ENCODE measurements at regions of chr2 and their contacts with region 1.

Region 1: GRCh38 chr2:11784747-11785610 is 38.5 kb downstream of the LPIN1 start:
- DNase-seq: peak; percentile 46
- H3K4me3 Mint-ChIP-seq: no peak overlapping the region
- H3K27ac Mint-ChIP-seq: no peak overlapping the region
- H3K4me1 Mint-ChIP-seq: no peaks in the 10 kb centered on the region
- H3K27me3 Mint-ChIP-seq: no peaks in the 10 kb centered on the region

Region 2: DNA sequence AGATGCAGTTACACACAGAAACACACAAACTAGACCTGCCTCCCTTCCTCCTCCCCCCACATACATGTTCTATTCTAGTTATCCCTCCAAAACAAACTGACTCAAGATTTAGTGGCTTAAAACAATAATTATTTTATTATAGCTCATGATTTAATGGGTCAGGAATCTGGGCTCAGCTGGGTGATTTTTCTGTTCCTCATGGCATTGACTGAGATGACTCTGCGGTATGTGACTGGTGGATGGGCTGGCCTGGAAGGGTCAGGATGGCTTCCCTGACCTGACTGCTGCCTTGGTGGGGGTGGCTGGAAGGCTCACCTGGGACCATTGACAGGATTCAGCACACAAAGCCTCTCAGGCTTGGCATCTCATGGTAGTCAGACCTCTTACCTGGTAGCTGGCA is 81.3 kb before region 1 on chr2:
- CTCF ChIA-PET with region 1: interaction called, 364 read pairs
- POLR2A ChIA-PET with region 1: no interaction called
- intact Hi-C with region 1: no loop called
- DNase-seq: no peak
- H3K4me3 Mint-ChIP-seq: no peak overlapping the region
- H3K27ac Mint-ChIP-seq: no peak overlapping the region
- H3K4me1 Mint-ChIP-seq: no peaks in the 10 kb centered on the region
- H3K27me3 Mint-ChIP-seq: no peaks in the 10 kb centered on the region

Region 3: GRCh38 chr2:12076810-12077209 is 291.8 kb after region 1 on chr2:
- CTCF ChIA-PET with region 1: no interaction called
- POLR2A ChIA-PET with region 1: no interaction called
- intact Hi-C with region 1: no loop called
- DNase-seq: peak; percentile 18
- H3K4me3 Mint-ChIP-seq: no peak overlapping the region
- H3K27ac Mint-ChIP-seq: no peak overlapping the region
- H3K4me1 Mint-ChIP-seq: peaks cover 6% of the 10 kb centered on the region
- H3K27me3 Mint-ChIP-seq: no peaks in the 10 kb centered on the region

Measured in activated CD4-positive, alpha-beta memory T cell treated with anti-CD3 and anti-CD28 coated beads for 36 hours (primary cell).